ENCODE measurements at regions of chr2 and their contacts with region 1.

Region 1: DNA sequence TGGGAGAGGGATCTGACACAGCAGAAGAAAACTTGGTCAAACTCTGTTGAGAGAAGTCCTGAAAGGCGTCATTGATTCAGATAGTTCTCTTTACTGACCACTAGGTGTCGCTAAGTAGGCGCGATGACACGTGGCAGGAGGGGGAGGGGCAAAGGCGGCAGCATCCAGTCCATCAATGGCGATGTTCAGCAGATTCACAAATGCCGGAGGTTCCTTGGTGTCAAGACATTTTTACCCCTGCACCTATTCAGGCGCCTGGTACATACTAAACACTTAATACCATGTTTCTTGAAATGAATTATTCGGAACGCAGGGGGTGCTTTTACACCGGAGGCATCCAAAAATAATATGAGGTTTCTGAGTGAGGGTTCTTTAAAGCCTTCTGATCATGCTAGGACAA is 3.0 kb upstream of the PLEK start:
- DNase-seq: peak; percentile 63
- ATAC-seq: peak; percentile 66
- H3K4me3 Mint-ChIP-seq: peak overlapping the region; percentile 84
- H3K27ac Mint-ChIP-seq: peak overlapping the region; percentile 91
- H3K4me1 Mint-ChIP-seq: peaks cover 56% of the 10 kb centered on the region
- H3K27me3 Mint-ChIP-seq: no peaks in the 10 kb centered on the region
- CTCF ChIP-seq: peak; percentile 33

Region 2: DNA sequence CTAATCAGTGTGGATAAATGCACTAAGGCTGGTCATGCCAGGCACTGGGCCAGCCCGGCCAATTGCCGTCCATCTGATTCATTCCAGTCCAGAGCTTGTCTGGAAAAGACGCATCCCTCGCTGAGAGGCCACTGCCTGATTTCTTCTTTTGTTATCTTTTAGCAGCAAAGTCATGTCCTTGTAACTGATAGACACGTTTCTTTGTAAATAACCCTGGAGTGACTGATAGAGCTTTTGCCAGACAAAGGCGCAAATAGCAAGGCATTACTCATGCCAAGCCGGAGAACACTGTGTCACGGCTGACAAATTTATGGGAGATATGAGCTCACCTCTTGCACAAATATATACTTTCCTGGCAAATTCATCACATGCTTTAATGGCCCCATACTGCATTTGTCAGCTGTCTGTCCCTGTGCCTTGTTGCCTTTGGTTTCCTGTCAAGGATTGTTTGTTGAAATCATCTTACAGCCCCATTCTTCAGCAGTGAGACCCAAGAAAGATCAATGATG is 800.6 kb before region 1 on chr2:
- CTCF ChIA-PET with region 1: no interaction called
- POLR2A ChIA-PET with region 1: no interaction called
- intact Hi-C with region 1: no loop called
- DNase-seq: no peak
- ATAC-seq: no peak
- H3K4me3 Mint-ChIP-seq: no peak overlapping the region
- H3K27ac Mint-ChIP-seq: no peak overlapping the region
- H3K4me1 Mint-ChIP-seq: no peaks in the 10 kb centered on the region
- H3K27me3 Mint-ChIP-seq: no peaks in the 10 kb centered on the region
- CTCF ChIP-seq: no peak

Region 3: DNA sequence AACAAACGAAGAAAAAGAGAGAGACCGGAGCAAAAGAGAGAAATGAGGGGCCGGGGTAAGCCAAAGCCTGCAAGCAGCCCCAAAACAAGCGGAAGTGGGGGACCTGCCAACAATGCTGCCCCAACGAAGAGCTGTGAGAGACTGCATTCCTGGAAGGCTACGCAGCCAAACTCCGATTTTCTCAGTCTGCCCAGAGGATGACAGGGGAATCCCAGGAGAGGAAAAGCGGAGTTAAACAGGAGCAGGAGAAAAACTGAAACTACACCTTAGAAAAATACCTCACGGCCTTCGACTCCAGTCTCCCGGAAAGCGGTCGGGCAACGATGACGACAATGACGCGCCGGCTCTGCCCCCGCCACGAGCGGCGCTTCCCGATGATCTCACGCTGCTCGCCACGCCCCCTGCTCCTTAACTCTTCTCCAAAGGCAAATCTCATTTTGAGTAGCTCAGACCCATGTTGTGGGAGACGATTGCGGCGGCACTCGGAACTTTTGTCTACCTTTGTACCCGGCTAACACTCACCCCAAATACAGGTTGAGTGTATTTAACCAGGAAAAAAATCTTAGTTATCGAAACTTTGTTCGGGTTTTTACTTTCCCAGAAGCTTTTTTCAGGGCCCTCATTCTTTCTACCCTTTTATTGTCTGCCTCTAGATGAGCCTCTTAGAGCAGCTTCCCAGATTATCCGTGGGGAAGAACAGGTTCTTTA is 299.2 kb before region 1 on chr2 and contains the start of gene C1D:
- CTCF ChIA-PET with region 1: no interaction called
- POLR2A ChIA-PET with region 1: no interaction called
- intact Hi-C with region 1: no loop called
- DNase-seq: peak; percentile 94
- ATAC-seq: peak; percentile 92
- H3K4me3 Mint-ChIP-seq: peak within 1 kb of the TSS; percentile 93
- H3K27ac Mint-ChIP-seq: peak within 1 kb of the TSS; percentile 95
- H3K4me1 Mint-ChIP-seq: peaks cover 41% of the 10 kb centered on the region
- H3K27me3 Mint-ChIP-seq: peaks cover 2% of the 10 kb centered on the region
- CTCF ChIP-seq: no peak
- total RNA-seq, gene C1D: 21.5 and 25.2 TPM in 2 replicates

Region 4: DNA sequence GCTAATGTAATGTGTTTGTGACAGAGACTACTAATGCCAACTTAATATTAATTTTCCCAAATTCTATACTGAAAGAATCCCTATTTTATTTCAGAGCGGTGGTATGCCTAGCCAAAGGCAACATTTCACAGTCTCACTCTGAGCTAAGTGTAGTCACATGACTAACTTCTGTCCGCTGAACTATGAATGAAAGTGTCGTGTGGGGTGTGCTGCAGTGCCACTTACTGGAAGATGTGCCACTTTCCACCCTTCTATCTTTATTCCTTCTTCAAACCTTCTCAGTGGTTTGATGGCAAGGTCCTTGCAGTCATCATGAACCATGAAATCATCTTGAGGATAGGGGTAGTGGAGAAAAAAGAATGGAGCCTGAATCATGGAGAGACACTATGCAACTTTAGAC is 252.0 kb before region 1 on chr2:
- CTCF ChIA-PET with region 1: no interaction called
- POLR2A ChIA-PET with region 1: no interaction called
- intact Hi-C with region 1: no loop called
- DNase-seq: no peak
- ATAC-seq: peak; percentile 28
- H3K4me3 Mint-ChIP-seq: no peak overlapping the region
- H3K27ac Mint-ChIP-seq: no peak overlapping the region
- H3K4me1 Mint-ChIP-seq: peaks cover 4% of the 10 kb centered on the region
- H3K27me3 Mint-ChIP-seq: no peaks in the 10 kb centered on the region
- CTCF ChIP-seq: no peak

Region 5: GRCh38 chr2:68121873-68122679 is 240.0 kb before region 1 on chr2:
- CTCF ChIA-PET with region 1: interaction called, 6 read pairs
- POLR2A ChIA-PET with region 1: interaction called, 3 read pairs
- intact Hi-C with region 1: loop called (anchors 1 kb)
- DNase-seq: peak; percentile 69
- ATAC-seq: peak; percentile 26
- H3K4me3 Mint-ChIP-seq: peak overlapping the region; percentile 77
- H3K27ac Mint-ChIP-seq: peak overlapping the region; percentile 97
- H3K4me1 Mint-ChIP-seq: peaks cover 48% of the 10 kb centered on the region
- H3K27me3 Mint-ChIP-seq: no peaks in the 10 kb centered on the region
- CTCF ChIP-seq: peak; percentile 100

Region 6: DNA sequence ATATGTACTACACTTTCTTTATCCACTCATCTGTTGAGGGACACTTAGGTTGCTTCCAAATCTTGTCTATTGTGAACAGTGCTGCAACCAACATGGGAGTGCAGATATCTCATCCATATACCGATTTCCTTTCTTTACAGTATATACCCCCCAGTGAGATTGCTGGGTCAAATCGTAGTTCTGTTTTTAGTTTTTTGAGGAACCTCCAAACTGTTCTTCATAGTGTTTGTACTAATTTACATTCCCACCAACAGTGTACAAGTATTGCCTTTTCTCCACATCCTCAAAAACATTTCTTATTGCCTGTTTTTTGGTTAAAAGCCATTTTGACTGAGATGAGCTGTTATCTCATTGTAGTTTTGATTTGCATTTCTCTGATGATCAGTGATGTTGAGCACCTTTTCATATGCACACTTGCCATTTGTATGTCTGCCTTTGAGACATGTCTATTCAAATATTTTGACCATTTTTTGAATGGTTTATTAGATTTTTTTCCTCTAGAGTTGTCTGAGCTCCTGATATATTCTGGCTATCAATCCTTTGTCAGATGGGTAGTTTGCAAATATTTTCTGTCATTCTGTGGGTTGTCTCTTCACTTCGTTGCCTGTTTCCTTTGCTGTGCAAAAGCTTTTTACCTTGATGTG is 15.2 kb after region 1 on chr2:
- CTCF ChIA-PET with region 1: interaction called, 3 read pairs
- POLR2A ChIA-PET with region 1: interaction called, 10 read pairs
- intact Hi-C with region 1: loop called (anchors 1 kb)
- DNase-seq: no peak
- ATAC-seq: peak; percentile 80
- H3K4me3 Mint-ChIP-seq: peak overlapping the region; percentile 33
- H3K27ac Mint-ChIP-seq: peak overlapping the region; percentile 82
- H3K4me1 Mint-ChIP-seq: peaks cover 87% of the 10 kb centered on the region
- H3K27me3 Mint-ChIP-seq: no peaks in the 10 kb centered on the region
- CTCF ChIP-seq: no peak

Region 7: GRCh38 chr2:68403199-68403644 is 41.2 kb after region 1 on chr2:
- CTCF ChIA-PET with region 1: interaction called, 9 read pairs
- POLR2A ChIA-PET with region 1: interaction called, 16 read pairs
- intact Hi-C with region 1: loop called (anchors 2 kb)
- DNase-seq: peak; percentile 43
- ATAC-seq: peak; percentile 89
- H3K4me3 Mint-ChIP-seq: peak overlapping the region; percentile 63
- H3K27ac Mint-ChIP-seq: peak overlapping the region; percentile 88
- H3K4me1 Mint-ChIP-seq: peaks cover 98% of the 10 kb centered on the region
- H3K27me3 Mint-ChIP-seq: no peaks in the 10 kb centered on the region
- CTCF ChIP-seq: no peak

Region 8: DNA sequence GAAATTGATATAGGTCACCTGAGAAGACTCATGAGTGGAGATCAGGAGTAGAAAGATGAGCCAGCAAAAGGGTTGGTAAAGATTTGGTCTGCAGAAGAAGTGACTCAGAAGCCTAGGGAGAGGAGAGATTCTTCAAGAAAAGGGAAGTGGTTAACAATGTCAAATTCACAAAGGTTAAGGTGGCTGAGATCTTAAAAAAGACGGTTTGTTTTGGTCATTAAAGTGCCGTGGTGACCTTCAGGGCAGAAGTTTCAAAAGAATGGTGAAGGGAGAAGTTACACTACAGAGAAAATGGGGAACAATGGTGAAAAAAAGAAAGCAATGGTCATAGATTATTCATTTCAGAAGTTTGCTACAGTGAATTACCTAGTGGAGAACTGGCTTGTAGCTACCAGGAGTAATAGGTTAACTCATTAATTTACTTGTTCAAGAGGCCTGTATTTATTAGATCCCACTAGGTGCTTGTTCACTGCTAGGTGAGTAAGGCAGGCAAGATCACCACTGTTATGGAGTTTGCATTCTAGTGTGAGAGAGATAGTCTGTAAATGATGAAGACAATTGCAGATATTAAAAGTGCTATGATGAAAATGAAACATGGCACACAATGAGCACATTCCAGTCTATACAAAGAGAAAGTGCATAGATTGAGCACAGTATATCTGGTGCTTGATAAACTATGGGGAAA is 62.0 kb after region 1 on chr2:
- CTCF ChIA-PET with region 1: interaction called, 4 read pairs
- POLR2A ChIA-PET with region 1: interaction called, 9 read pairs
- intact Hi-C with region 1: loop called (anchors 1 kb)
- DNase-seq: no peak
- ATAC-seq: peak; percentile 78
- H3K4me3 Mint-ChIP-seq: no peak overlapping the region
- H3K27ac Mint-ChIP-seq: no peak overlapping the region
- H3K4me1 Mint-ChIP-seq: peaks cover 29% of the 10 kb centered on the region
- H3K27me3 Mint-ChIP-seq: no peaks in the 10 kb centered on the region
- CTCF ChIP-seq: no peak